ENCODE measurements at regions of chr12 and their contacts with region 1.

Region 1: DNA sequence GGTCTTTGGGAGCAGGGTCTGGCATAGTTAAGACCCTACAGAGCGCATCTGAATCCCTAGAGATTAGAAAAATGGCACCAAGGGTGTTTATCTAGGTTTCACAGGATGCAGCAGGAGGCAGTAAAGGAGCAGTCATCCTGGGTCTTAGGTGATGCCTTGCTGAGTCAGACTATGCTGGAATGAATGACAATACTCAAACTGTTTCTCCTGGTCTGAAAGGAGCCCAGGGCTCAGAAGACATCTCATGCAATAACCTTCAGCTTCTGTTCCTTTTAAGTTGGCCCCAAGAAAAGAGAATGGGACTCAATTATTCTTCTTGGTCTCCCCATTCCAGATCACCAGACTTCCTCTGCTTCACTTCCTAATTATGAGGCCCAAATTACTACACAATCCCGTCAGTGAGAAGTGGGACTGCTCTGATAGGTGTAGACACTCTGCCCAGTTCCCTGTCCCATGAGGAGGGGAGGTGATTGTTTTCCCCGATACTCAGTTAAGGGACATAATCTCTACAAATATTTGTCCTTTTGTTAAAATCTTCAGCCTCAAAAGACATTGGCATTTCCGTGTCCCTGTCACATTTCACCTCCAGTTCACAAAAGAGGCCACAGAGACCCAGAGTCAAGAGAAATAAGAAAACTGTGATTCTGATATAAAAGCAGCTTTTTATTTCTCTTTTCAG is 14.8 kb upstream of the APOF start:
- DNase-seq: peak; percentile 29
- H3K4me3 Mint-ChIP-seq: no peak overlapping the region
- H3K27ac Mint-ChIP-seq: no peak overlapping the region
- H3K4me1 Mint-ChIP-seq: peaks cover 3% of the 10 kb centered on the region
- H3K27me3 Mint-ChIP-seq: peaks cover 1% of the 10 kb centered on the region

Region 2: GRCh38 chr12:56346703-56347102 is 30.7 kb before region 1 on chr12:
- CTCF ChIA-PET with region 1: no interaction called
- POLR2A ChIA-PET with region 1: no interaction called
- intact Hi-C with region 1: no loop called
- DNase-seq: peak; percentile 46
- H3K4me3 Mint-ChIP-seq: no peak overlapping the region
- H3K27ac Mint-ChIP-seq: no peak overlapping the region
- H3K4me1 Mint-ChIP-seq: no peaks in the 10 kb centered on the region
- H3K27me3 Mint-ChIP-seq: no peaks in the 10 kb centered on the region

Region 3: GRCh38 chr12:56462565-56462964 is 85.1 kb after region 1 on chr12:
- CTCF ChIA-PET with region 1: interaction called, 12 read pairs
- POLR2A ChIA-PET with region 1: no interaction called
- intact Hi-C with region 1: loop called (anchors 1 kb)
- DNase-seq: no peak
- H3K4me3 Mint-ChIP-seq: no peak overlapping the region
- H3K27ac Mint-ChIP-seq: no peak overlapping the region
- H3K4me1 Mint-ChIP-seq: peaks cover 7% of the 10 kb centered on the region
- H3K27me3 Mint-ChIP-seq: no peaks in the 10 kb centered on the region

Measured in activated CD4-positive, alpha-beta memory T cell treated with anti-CD3 and anti-CD28 coated beads for 36 hours (primary cell).